B cell (primary cell): ENCODE measurements at regions of chr3 and their contacts with region 1.

Region 1: DNA sequence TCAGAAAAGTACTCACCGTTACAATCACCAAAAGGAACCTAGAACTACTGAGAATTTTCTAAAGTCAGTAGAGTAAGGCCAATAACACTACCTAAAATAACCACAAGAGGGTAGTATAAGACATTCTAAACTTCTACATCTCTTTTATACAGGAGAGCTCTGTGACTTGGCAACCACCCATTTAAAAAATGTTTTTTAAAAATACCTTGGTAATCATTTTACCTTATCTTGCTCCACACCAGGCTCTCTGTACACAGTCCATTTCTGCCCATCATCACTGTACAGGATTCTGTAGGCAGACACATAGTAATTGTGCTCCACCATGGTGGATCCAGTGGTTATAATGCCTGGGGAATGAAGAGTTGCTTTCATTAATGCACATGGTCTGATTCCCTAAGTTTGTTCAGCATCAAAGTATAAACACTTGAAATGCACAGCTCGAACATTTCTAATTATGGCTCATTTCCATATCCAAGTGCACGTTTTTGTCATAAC is 54.5 kb downstream of the ST3GAL6 start:
- DNase-seq: peak; percentile 52
- ATAC-seq: peak; percentile 56
- H3K4me3 ChIP-seq: no peak overlapping the region
- H3K4me3 Mint-ChIP-seq: no peak overlapping the region
- H3K27ac ChIP-seq: no peak overlapping the region
- H3K27ac Mint-ChIP-seq: no peak overlapping the region
- H3K4me1 ChIP-seq: no peaks in the 10 kb centered on the region
- H3K4me1 Mint-ChIP-seq: no peaks in the 10 kb centered on the region
- H3K27me3 ChIP-seq: no peaks in the 10 kb centered on the region
- H3K27me3 Mint-ChIP-seq: no peaks in the 10 kb centered on the region
- CTCF ChIP-seq: peak; percentile 89

Region 2: GRCh38 chr3:98246142-98246541 is 571.5 kb before region 1 on chr3:
- CTCF ChIA-PET with region 1: no interaction called
- POLR2A ChIA-PET with region 1: no interaction called
- intact Hi-C with region 1: no loop called
- DNase-seq: no peak
- ATAC-seq: no peak
- H3K4me3 ChIP-seq: no peak overlapping the region
- H3K4me3 Mint-ChIP-seq: no peak overlapping the region
- H3K27ac ChIP-seq: no peak overlapping the region
- H3K27ac Mint-ChIP-seq: no peak overlapping the region
- H3K4me1 ChIP-seq: no peaks in the 10 kb centered on the region
- H3K4me1 Mint-ChIP-seq: no peaks in the 10 kb centered on the region
- H3K27me3 ChIP-seq: no peaks in the 10 kb centered on the region
- H3K27me3 Mint-ChIP-seq: no peaks in the 10 kb centered on the region
- CTCF ChIP-seq: no peak

Region 3: GRCh38 chr3:98763076-98763475 is 54.5 kb before region 1 on chr3 and contains the start of gene ST3GAL6:
- CTCF ChIA-PET with region 1: no interaction called
- POLR2A ChIA-PET with region 1: no interaction called
- intact Hi-C with region 1: no loop called
- DNase-seq: no peak
- ATAC-seq: no peak
- H3K4me3 ChIP-seq: peak within 1 kb of the TSS in 1 of 5 experiments; percentile 72
- H3K4me3 Mint-ChIP-seq: no peak within 1 kb of the TSS
- H3K27ac ChIP-seq: no peak within 1 kb of the TSS
- H3K27ac Mint-ChIP-seq: no peak within 1 kb of the TSS
- H3K4me1 ChIP-seq: peaks cover 6 to 8% of the 10 kb centered on the region in 2 donors
- H3K4me1 Mint-ChIP-seq: peaks cover 17% of the 10 kb centered on the region
- H3K27me3 ChIP-seq: peaks cover 0 to 3% (median 0%) of the 10 kb centered on the region in 4 experiments
- H3K27me3 Mint-ChIP-seq: peaks cover 16% of the 10 kb centered on the region
- CTCF ChIP-seq: no peak
- total RNA-seq, gene ST3GAL6: not detected in 2 replicates

Region 4: DNA sequence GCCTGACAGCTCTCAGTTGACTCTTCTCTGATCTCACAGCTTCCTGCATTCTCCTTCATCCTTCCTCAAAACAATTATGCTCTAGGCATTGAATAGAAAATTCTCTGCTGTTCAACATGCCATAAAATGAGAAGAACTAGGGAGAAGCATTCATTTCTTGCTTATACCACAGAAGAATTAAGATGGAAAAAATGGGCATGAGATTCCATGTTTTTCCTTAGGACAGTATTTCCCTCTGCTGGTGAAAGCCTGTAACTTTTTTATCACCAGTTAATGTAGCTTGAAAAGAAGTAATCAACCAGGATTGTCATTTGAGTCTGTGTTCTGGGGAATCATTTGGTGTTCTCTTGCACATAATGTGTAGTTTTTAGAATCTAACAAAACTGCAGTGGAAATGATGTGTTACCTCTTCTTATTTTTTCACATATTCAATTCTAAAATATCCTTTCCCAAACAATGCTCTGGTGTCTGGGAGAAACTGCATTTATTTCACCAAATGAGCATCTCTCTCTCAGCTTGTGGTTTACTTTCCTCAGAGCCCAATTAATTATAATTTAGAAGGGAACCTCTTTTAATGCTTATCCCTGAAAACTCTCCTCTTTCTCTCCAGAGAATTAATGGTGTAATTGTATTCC is 176.7 kb after region 1 on chr3:
- CTCF ChIA-PET with region 1: interaction called, 6 read pairs
- POLR2A ChIA-PET with region 1: no interaction called
- intact Hi-C with region 1: loop called (anchors 1 kb)
- DNase-seq: no peak
- ATAC-seq: no peak
- H3K4me3 ChIP-seq: no peak overlapping the region
- H3K4me3 Mint-ChIP-seq: no peak overlapping the region
- H3K27ac ChIP-seq: no peak overlapping the region
- H3K27ac Mint-ChIP-seq: no peak overlapping the region
- H3K4me1 ChIP-seq: no peaks in the 10 kb centered on the region
- H3K4me1 Mint-ChIP-seq: no peaks in the 10 kb centered on the region
- H3K27me3 ChIP-seq: no peaks in the 10 kb centered on the region
- H3K27me3 Mint-ChIP-seq: no peaks in the 10 kb centered on the region
- CTCF ChIP-seq: no peak

Region 5: DNA sequence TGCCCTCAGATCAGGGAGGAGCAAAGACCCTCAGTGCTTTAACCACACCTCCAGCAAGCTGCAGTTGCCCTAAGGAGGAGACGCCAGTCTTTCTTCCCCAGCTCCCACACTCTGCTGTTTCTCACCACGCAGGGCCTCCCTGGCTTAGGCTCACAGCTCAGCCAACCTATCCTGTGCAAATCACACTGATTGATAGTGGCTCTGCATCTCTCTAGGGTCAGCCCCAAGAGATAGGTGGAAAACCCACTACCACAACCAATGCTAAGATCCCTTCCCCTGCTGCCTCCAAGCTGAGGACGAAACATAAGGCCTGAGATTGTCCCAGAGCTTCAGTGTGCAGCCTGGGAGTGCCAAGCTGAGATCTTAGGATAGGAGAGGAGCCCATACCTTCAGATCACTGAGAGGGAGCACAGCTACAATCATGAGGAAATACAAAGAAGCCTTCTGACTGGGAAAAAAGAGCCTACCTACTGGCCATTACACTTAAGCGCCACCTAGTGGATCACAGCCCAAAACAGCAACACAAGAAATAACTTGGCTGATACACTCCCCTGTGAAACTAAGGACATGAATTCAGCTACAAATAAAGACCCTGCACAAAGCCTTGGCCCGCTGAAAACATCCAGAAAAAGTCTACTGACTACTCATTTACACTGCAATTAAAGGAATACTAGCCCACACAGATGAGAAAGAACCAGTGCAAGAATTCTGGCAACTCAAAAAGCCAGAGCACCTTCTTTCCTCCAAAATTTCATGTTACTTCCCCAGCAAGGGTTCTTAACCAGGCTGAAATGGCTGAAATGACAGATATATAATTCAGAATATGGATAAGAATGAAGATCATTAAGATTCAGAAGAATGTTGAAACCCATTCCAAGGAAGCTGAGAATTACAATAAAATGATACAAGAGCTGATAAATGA is 355.4 kb after region 1 on chr3:
- CTCF ChIA-PET with region 1: interaction called, 12 read pairs
- POLR2A ChIA-PET with region 1: no interaction called
- intact Hi-C with region 1: no loop called
- DNase-seq: peak; percentile 11
- ATAC-seq: no peak
- H3K4me3 ChIP-seq: no peak overlapping the region
- H3K4me3 Mint-ChIP-seq: no peak overlapping the region
- H3K27ac ChIP-seq: no peak overlapping the region
- H3K27ac Mint-ChIP-seq: no peak overlapping the region
- H3K4me1 ChIP-seq: no peaks in the 10 kb centered on the region
- H3K4me1 Mint-ChIP-seq: no peaks in the 10 kb centered on the region
- H3K27me3 ChIP-seq: no peaks in the 10 kb centered on the region
- H3K27me3 Mint-ChIP-seq: peaks cover 3% of the 10 kb centered on the region
- CTCF ChIP-seq: peak; percentile 41

Region 6: DNA sequence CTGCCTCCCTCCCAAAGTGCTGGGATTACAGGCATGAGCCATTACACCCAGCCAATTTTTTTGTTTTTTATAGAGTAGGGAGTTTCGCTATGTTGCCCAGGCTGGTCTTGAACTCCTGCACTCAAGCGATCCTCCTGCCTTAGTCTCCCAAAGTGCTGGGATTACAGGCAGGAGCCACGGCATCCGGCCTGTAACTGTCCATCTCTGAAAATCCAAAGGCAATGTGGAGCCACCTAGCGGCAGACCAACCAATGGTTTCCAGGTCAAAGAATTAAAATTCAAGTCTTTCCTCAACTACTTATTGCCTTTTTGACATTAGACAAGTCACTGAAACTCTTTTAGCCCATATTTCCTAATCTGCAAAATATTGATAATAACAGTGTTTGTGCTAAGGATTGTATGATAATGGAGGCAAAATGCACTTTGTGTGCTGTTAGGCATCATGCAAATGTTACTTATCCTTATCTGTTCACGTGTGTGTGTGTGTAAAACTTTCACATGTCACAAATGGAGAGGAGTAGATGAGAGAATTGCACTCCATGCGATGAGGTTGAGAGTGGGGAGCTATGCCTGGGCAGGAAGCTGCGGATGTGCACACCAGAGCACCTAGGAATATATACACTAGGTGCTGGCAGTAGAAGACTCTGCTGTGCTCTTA is 869.5 kb after region 1 on chr3:
- CTCF ChIA-PET with region 1: interaction called, 3 read pairs
- POLR2A ChIA-PET with region 1: no interaction called
- intact Hi-C with region 1: loop called (anchors 5 kb)
- DNase-seq: no peak
- ATAC-seq: no peak
- H3K4me3 ChIP-seq: no peak overlapping the region
- H3K4me3 Mint-ChIP-seq: no peak overlapping the region
- H3K27ac ChIP-seq: no peak overlapping the region
- H3K27ac Mint-ChIP-seq: no peak overlapping the region
- H3K4me1 ChIP-seq: no peaks in the 10 kb centered on the region
- H3K4me1 Mint-ChIP-seq: no peaks in the 10 kb centered on the region
- H3K27me3 ChIP-seq: no peaks in the 10 kb centered on the region
- H3K27me3 Mint-ChIP-seq: peaks cover 10% of the 10 kb centered on the region
- CTCF ChIP-seq: peak; percentile 31

Region 7: GRCh38 chr3:99753268-99753975 is 935.8 kb after region 1 on chr3:
- CTCF ChIA-PET with region 1: interaction called, 19 read pairs
- POLR2A ChIA-PET with region 1: no interaction called
- intact Hi-C with region 1: no loop called
- DNase-seq: peak; percentile 28
- ATAC-seq: peak; percentile 49
- H3K4me3 ChIP-seq: no peak overlapping the region
- H3K4me3 Mint-ChIP-seq: no peak overlapping the region
- H3K27ac ChIP-seq: no peak overlapping the region
- H3K27ac Mint-ChIP-seq: no peak overlapping the region
- H3K4me1 ChIP-seq: no peaks in the 10 kb centered on the region
- H3K4me1 Mint-ChIP-seq: no peaks in the 10 kb centered on the region
- H3K27me3 ChIP-seq: peaks cover 0 to 2% (median 1%) of the 10 kb centered on the region in 4 experiments
- H3K27me3 Mint-ChIP-seq: peaks cover 15% of the 10 kb centered on the region
- CTCF ChIP-seq: peak; percentile 66

Region 8: DNA sequence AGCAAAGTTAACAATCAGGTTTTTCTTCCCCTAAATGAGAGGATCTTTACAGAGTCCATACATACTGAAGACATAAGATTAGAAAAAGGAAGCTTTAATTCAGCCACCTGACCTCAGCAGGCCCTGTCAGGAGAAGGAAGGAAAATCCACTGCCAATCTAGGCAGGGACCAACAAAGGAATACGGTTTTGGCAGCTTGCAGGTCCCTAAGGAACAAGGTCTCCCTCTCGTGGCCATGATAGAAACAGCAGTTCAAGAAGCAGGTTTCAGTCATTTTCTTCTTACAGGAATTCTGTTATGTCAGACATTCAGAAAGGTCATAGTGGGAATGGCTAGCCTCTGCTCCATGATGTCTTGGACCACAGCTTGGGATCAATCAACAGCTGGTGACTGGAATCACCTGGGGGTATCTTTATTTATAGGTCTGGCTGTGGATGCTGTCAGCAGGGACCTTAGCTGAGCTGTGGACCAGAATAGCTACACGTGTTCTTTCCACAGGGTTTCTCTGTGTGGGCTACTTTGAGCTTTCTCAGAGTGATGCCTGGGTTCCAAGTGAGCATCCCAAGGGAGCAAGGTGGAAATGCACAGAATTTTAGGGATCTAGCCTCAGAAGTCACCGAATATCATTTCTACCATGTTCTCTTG is 990.7 kb after region 1 on chr3:
- CTCF ChIA-PET with region 1: interaction called, 8 read pairs
- POLR2A ChIA-PET with region 1: no interaction called
- intact Hi-C with region 1: loop called (anchors 5 kb)
- DNase-seq: peak; percentile 64
- ATAC-seq: peak; percentile 41
- H3K4me3 ChIP-seq: no peak overlapping the region
- H3K4me3 Mint-ChIP-seq: no peak overlapping the region
- H3K27ac ChIP-seq: no peak overlapping the region
- H3K27ac Mint-ChIP-seq: no peak overlapping the region
- H3K4me1 ChIP-seq: no peaks in the 10 kb centered on the region
- H3K4me1 Mint-ChIP-seq: no peaks in the 10 kb centered on the region
- H3K27me3 ChIP-seq: no peaks in the 10 kb centered on the region
- H3K27me3 Mint-ChIP-seq: no peaks in the 10 kb centered on the region
- CTCF ChIP-seq: peak; percentile 90